ENCODE measurements at regions of chr1 and their contacts with region 1.

Region 1: GRCh38 chr1:17370618-17371017 is 1.4 kb upstream of the PADI6 start:
- DNase-seq: no peak
- H3K4me3 ChIP-seq: no peak overlapping the region
- H3K27ac ChIP-seq: no peak overlapping the region
- H3K4me1 ChIP-seq: peaks cover 0 to 2% (median 0%) of the 10 kb centered on the region in 4 experiments; a peak in 1 of 7 replicates
- H3K27me3 ChIP-seq: no peaks in the 10 kb centered on the region; a peak in 1 of 7 replicates
- CTCF ChIP-seq: peak; percentile 53 to 78 (median 62)
- EP300 ChIP-seq: no peak
- POLR2A ChIP-seq: no peak
- RAD21 ChIP-seq: peak; percentile 53 to 64

Region 2: DNA sequence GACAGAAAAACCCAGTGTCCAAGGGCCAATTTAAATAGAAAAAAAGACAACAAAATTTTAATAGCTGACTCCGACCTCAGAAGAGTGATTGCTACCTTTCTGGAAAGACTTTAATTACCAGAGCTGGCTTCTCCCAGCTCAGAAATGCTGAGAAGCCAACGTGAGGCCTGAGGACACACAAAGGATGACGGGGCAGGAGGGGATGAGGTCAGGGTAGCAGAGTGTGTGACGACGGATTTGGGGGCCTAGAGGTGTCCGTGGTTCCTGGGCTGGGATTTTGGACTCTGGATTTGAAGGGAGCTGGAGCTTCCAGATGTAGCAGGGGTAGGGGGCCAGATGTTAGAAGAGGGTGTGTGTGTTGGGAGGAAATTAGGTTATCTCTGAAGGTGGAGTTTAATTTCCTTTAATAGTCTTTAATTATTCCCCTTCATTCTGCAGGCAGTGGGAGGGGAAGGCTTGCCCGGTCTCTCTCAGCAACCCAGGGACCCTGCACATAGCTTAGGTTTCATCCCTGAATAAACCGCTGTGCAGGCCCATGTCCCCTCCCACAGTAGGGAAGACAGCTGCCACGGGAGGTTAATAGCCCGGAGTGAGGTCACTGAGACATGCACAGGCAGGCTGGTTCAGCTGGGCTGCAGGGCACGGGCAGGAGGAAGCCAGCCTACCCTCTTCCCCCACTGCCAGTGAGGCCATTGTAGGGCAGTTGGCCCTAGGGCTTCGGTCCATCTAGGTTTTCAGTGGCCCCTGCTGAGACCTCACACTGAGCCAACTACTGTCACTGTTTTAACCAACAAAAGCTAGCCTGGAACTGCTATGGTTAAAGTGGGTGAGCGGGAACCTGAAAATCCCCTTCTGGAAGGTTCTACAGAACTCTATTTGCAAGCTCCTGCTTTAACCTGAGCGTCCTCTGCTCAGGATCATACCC is 125.5 kb before region 1 on chr1:
- CTCF ChIA-PET with region 1: no interaction called
- POLR2A ChIA-PET with region 1: no interaction called
- DNase-seq: no peak
- H3K4me3 ChIP-seq: no peak overlapping the region
- H3K27ac ChIP-seq: no peak overlapping the region
- H3K4me1 ChIP-seq: peaks cover 0 to 12% (median 3%) of the 10 kb centered on the region in 4 experiments; a peak in 4 of 7 replicates
- H3K27me3 ChIP-seq: no peaks in the 10 kb centered on the region
- CTCF ChIP-seq: no peak
- EP300 ChIP-seq: no peak
- POLR2A ChIP-seq: no peak
- RAD21 ChIP-seq: no peak

Region 3: DNA sequence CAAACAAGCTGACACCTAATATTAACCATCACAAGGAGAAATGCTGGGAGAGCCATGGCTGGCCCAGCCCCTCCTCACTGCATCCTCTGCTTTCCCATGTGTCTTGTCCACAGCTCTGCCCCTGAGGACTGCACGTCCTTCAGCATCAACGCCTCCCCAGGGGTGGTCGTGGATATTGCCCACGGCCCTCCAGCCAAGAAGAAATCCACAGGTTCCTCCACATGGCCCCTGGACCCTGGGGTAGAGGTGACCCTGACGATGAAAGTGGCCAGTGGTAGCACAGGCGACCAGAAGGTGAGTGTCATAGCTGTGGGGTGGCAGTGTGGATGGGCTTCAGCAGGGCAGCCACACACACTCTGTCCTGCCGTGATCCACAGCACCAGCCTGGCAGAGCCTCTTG is 39.8 kb before region 1 on chr1:
- CTCF ChIA-PET with region 1: interaction called, 12 read pairs
- POLR2A ChIA-PET with region 1: no interaction called
- DNase-seq: no peak
- H3K4me3 ChIP-seq: no peak overlapping the region
- H3K27ac ChIP-seq: no peak overlapping the region
- H3K4me1 ChIP-seq: no peaks in the 10 kb centered on the region
- H3K27me3 ChIP-seq: peaks cover 0 to 3% (median 0%) of the 10 kb centered on the region in 4 experiments; a peak in 4 of 7 replicates
- CTCF ChIP-seq: no peak
- EP300 ChIP-seq: no peak
- POLR2A ChIP-seq: no peak
- RAD21 ChIP-seq: no peak

Region 4: GRCh38 chr1:17342014-17342441 is 28.6 kb before region 1 on chr1:
- CTCF ChIA-PET with region 1: interaction called, 11 read pairs
- POLR2A ChIA-PET with region 1: no interaction called
- DNase-seq: no peak
- H3K4me3 ChIP-seq: no peak overlapping the region
- H3K27ac ChIP-seq: no peak overlapping the region
- H3K4me1 ChIP-seq: no peaks in the 10 kb centered on the region
- H3K27me3 ChIP-seq: no peaks in the 10 kb centered on the region
- CTCF ChIP-seq: no peak
- EP300 ChIP-seq: no peak
- POLR2A ChIP-seq: no peak
- RAD21 ChIP-seq: no peak

Region 5: GRCh38 chr1:17355898-17356297 is 14.7 kb before region 1 on chr1:
- CTCF ChIA-PET with region 1: interaction called, 28 read pairs
- POLR2A ChIA-PET with region 1: interaction called, 3 read pairs
- DNase-seq: no peak
- H3K4me3 ChIP-seq: no peak overlapping the region
- H3K27ac ChIP-seq: no peak overlapping the region
- H3K4me1 ChIP-seq: peaks cover 0 to 2% (median 1%) of the 10 kb centered on the region in 4 experiments; a peak in 1 of 7 replicates
- H3K27me3 ChIP-seq: no peaks in the 10 kb centered on the region
- CTCF ChIP-seq: no peak
- EP300 ChIP-seq: no peak
- POLR2A ChIP-seq: no peak
- RAD21 ChIP-seq: no peak

Region 6: GRCh38 chr1:17405898-17406759 is 35.5 kb after region 1 on chr1:
- CTCF ChIA-PET with region 1: interaction called, 19 read pairs
- POLR2A ChIA-PET with region 1: interaction called, 5 read pairs
- DNase-seq: peak; percentile 50 to 89
- H3K4me3 ChIP-seq: no peak overlapping the region
- H3K27ac ChIP-seq: no peak overlapping the region
- H3K4me1 ChIP-seq: peaks cover 0 to 10% (median 6%) of the 10 kb centered on the region in 4 experiments; a peak in 4 of 7 replicates
- H3K27me3 ChIP-seq: no peaks in the 10 kb centered on the region
- CTCF ChIP-seq: peak; percentile 90 to 98 (median 92)
- EP300 ChIP-seq: no peak
- POLR2A ChIP-seq: peak in 1 of 2 experiments; percentile 50
- RAD21 ChIP-seq: peak; percentile 82 to 83

Region 7: GRCh38 chr1:17427696-17428660 is 57.4 kb after region 1 on chr1:
- CTCF ChIA-PET with region 1: no interaction called
- POLR2A ChIA-PET with region 1: no interaction called
- DNase-seq: no peak
- H3K4me3 ChIP-seq: no peak overlapping the region
- H3K27ac ChIP-seq: 0 out of 2 replicates have a peak overlapping the region, but pooled peaks have one; percentile 29
- H3K4me1 ChIP-seq: peaks cover 2 to 21% (median 15%) of the 10 kb centered on the region in 4 experiments
- H3K27me3 ChIP-seq: no peaks in the 10 kb centered on the region
- CTCF ChIP-seq: no peak
- EP300 ChIP-seq: no peak
- POLR2A ChIP-seq: peak; percentile 15 to 45; a peak in 1 of 3 replicates
- RAD21 ChIP-seq: no peak